Posterior vena cava (tissue), 2 donors: ENCODE measurements at regions of chr17 and their contacts with region 1.

Region 1: DNA sequence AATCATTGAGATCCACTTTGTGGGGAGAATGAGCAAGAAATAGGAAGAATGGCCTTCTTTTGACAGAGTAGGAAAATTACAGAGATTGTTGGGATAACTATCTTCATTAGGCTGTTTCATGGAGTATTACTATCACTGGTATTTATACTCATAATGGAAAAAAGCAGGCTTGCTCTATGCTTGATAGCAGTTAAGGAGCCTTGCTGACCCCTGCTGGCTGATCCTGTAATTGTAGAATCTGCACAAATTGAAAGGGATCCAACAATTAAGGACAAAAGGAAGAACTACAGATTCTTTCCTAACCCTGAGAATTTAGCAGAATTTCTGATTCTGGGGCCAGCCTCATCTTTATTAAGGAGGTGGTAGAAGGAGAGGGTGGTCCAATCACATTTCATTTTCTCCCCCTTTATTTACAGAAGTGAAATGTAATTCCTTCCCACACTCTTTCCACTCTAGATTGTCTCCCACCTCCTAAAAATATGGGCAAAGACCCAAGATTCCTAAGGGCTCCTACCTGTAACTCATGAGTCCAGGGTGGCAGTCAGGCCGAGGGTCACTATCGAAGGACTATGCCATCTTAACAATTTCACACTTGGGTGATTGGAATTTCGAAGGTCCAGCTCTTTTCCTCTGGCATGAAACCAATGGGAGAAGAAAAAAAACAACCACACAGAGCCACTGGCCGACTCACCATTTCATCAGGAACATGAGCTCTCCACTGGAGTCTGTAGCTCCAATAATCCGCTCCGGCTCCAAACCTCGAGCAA is 26.3 kb downstream of the NFE2L1 start:
- DNase-seq: peak; percentile 89

Region 2: DNA sequence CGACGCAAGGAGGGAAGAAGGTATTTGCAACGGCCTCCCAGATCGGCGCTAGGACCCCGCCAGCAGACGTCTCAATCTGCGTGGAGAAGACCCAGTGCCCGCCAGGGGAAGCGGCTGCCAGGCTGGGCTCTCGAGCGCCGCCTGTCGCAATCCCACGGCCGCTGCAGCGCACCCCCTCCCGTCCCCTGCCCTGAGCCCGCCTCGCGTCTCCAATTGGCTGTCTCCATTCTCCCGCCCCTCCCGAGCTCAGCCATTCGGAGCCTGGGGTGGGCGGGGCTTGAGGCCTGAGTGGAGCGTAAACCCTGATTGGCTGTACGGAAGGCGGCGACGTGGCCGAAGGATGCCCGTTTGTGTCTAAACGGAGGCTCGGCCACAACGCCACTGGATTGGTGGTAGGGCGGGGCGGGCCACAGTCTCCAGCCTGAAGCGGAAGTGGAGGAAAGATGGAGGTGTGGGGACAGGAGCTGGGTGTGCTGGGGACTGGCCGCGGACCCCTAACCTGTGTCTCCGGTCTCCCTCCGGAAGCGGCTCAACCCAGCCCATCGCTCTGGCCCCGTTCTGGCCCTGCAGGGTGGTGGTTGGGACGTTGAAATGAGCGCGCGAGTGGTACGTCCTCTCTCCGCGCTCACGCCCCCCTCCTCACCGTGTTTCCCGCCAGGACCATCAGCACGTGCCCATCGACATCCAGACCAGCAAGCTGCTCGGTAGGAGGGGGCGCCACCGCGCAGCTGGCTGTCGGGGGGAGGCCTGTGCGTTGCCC is 103.6 kb before region 1 on chr17 and contains the start of gene CDK5RAP3:
- intact Hi-C with region 1: no loop called
- DNase-seq: peak; percentile 100
- total RNA-seq, gene CDK5RAP3: 80.3 to 95.8 TPM

Region 3: DNA sequence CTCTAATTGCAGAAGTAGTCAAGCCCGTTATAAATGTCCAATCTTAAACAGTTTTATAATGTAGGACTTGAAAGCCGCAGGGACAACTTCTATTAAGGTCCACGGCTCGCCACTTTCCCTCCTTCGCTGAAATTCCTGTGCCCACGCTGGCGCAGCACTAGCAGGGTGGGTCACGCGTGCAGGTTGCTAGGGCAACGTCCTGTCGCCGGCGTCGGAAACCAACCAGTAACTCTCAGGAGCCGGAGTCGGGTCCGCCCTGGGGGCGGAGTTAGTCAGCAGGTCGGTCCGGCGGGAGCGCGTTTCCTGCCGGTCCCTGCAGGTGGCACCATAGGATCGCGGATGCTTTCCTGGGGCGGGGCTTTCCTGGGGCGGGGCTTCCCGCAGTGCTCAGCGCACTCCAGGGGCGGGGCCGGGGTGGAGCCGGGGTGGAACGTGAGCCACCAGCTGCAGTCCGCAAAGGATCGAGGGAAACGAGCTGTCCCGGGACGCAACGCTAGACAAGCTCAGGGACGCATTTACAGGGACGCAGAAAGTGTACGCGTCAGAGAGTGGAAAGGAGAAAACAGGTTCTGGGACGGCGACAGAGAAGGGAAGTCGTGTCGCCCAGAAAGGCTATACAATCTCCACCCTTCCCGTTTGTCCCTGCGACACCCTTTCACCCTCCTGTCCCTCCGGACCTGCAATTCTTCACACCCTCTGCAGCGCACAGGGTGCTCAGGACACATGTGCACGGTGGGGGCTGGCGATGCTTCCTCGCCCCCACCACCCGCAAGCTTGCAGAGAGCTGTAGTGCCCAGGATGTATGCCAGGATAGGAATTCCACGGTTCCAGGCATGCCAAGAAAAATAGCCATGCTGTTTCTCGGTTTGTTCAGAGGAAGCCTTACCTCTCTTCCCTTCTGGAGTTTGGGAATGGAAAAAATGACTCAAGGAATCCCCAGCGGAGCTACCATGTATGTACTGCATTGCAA is 49.3 kb before region 1 on chr17:
- intact Hi-C with region 1: loop called (anchors 2 kb)
- DNase-seq: peak; percentile 100

Region 4: DNA sequence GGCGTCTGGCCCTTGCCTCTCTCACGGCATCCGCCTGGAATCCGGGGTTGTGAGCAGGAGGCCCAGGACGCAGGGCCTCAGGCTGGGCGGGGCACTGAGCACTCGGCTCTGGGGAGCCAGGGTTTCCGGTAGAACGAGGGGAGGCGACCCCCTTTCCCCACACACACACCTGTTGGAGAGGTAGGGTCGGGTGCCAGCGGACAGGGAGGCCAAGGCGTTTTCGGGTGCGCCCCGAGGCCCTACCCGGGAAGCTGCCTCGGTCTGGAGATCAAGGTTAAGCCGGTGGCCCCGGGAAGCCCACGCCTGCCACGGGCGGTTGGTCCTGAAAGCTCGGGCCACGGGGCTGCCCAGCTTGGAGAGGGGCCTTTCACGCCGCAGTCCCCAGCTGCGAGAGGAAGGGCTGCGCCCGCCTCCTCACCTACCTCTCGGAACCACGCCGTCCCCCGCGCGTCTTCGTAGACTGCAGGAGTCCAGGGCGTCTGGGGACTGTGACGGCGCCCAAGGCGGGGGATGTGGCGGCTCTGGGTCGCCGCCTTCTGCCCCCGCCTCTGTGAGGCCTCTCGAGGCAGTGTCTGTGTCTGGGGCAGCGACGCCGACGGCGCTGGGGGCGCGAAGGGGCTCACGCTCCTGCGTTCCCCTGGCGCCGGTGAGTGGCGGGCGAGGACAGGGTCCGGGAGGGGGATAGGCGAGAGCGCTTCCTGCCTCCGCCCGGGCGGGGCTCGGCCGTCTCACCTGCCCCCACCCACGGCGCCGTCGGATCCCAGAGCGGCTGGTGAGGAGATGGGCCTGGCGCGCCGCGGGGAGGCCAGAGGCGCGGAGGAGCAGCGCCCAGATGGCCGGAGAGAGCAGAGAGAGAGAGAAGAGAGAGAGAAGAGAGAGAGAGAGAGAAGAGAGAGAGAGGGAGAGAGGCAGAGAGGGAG is 571.9 kb after region 1 on chr17:
- intact Hi-C with region 1: no loop called
- DNase-seq: no peak